Right cardiac atrium (tissue), 5 donors: ENCODE measurements at regions of chr7 and their contacts with region 1.

Region 1: GRCh38 chr7:63887031-63887430 is 111.6 kb upstream of the ZNF722 start:
- DNase-seq: no peak
- ATAC-seq: no peak
- H3K4me3 ChIP-seq: no peak overlapping the region
- H3K27ac ChIP-seq: no peak overlapping the region
- H3K4me1 ChIP-seq: no peaks in the 10 kb centered on the region
- H3K27me3 ChIP-seq: no peaks in the 10 kb centered on the region

Region 2: DNA sequence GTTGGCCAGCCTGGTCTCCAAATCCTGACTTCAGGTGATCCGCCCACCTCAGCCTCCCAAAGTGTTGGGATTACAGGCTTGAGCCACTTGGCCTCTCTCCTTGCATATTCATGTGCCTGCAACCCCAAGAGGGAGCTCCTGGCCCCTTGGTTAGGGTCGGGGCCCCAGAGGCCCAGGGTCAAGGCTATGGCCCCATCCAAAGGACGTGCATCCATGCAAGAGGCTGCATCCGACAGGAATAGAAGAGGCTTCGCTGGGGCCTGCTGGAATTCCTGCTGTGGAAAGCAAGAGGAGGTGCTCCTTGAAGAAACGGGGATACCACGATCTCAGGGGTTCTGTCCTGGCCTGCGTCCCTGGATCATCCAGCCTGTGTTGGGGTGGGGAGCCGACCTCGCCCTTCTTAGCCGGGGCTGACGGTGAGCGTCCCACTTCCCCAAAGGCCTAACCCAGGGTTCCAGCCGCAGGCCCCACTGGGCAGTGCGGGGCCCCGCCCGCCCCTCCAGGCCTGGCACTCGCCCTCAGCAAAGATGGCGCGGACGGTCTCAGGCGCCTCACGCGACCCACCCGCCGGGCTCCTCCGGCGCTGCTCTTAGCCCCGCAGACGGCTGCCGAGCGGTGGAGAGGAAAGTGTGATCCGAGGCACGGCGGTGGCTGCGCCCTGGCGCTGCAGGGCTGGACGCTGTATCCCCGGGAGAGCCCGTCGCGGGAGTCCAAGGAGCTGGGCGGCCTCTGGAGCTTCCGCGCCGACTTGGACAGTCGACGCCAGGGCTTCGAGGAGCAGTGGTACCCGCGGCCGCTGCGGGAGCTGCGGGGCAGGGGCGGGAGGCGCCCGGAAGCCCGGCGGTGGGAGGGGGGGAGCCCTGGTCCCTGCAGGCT is 212.9 kb after region 1 on chr7:
- intact Hi-C with region 1: loop called in 1 of 4 experiments (anchors 10 kb)
- DNase-seq: no peak
- ATAC-seq: no peak
- H3K4me3 ChIP-seq: no peak overlapping the region
- H3K27ac ChIP-seq: no peak overlapping the region
- H3K4me1 ChIP-seq: no peaks in the 10 kb centered on the region
- H3K27me3 ChIP-seq: no peaks in the 10 kb centered on the region